HCT116 (cell line): ENCODE measurements at regions of chr11 and their contacts with region 1.

Region 1: GRCh38 chr11:13152736-13153533 is 124.7 kb upstream of the BMAL1 start:
- DNase-seq: no peak
- ATAC-seq: 0 out of 2 replicates have a peak, but pooled peaks have one; percentile 46
- H3K4me3 ChIP-seq: no peak overlapping the region
- H3K27ac ChIP-seq: no peak overlapping the region
- H3K4me1 ChIP-seq: peaks cover 0 to 11% of the 10 kb centered on the region in 2 experiments; a peak in 1 of 4 replicates
- H3K27me3 ChIP-seq: no peaks in the 10 kb centered on the region
- CTCF ChIP-seq: peak; percentile 51 to 84 (median 55); a peak in 5 of 6 replicates
- POLR2A ChIP-seq: no peak
- RAD21 ChIP-seq: peak; percentile 84

Region 2: DNA sequence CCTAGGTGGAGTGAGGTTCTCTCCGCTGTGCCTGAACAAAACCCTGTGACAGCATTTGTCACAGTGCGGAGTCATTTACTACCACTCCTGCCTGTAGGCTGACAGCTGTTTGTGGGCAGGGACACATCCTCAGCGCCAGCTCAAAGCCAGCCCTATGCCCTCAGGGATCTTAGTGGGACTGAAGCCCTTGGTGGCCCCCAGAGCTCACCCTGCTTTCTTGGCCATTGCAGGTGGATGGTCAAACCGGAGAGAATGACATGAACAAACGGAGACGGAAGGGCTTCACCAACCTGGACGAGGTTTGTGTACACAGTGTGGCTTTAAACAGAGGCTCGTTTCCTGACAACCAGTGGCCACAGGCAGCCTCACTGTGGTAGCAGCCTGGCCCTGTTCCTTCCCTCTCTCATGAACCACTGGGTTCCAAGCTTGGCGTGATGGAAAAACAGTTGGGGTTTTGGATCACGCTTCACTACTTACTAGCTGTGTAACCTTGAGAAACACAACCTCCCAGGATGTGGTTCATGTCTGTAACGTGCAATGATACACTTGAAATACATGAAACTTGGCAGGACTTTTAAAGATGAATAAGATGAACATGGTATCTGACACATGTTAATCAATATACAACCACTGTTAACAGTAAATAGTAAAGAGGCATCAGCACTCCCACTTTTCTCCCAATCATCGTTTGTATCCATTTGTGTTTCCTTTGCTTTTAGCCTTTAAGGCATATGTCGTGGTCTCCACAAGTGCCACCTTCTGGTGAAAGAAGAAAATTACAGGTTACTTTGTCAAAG is 916.8 kb before region 1 on chr11:
- CTCF ChIA-PET with region 1: no interaction called
- POLR2A ChIA-PET with region 1: no interaction called
- RAD21 ChIA-PET with region 1: no interaction called
- intact Hi-C with region 1: no loop called
- DNase-seq: peak; percentile 32
- ATAC-seq: peak; percentile 75
- H3K4me3 ChIP-seq: no peak overlapping the region
- H3K27ac ChIP-seq: no peak overlapping the region
- H3K4me1 ChIP-seq: peaks cover 4 to 23% of the 10 kb centered on the region in 2 experiments; a peak in 3 of 4 replicates
- H3K27me3 ChIP-seq: no peaks in the 10 kb centered on the region
- CTCF ChIP-seq: peak; percentile 55 to 82 (median 69)
- POLR2A ChIP-seq: no peak
- RAD21 ChIP-seq: peak; percentile 83

Region 3: GRCh38 chr11:13016415-13016814 is 136.5 kb before region 1 on chr11:
- CTCF ChIA-PET with region 1: no interaction called
- POLR2A ChIA-PET with region 1: no interaction called
- RAD21 ChIA-PET with region 1: no interaction called
- intact Hi-C with region 1: loop called (anchors 5 kb)
- DNase-seq: peak; percentile 13
- ATAC-seq: peak; percentile 73
- H3K4me3 ChIP-seq: no peak overlapping the region
- H3K27ac ChIP-seq: no peak overlapping the region
- H3K4me1 ChIP-seq: no peaks in the 10 kb centered on the region
- H3K27me3 ChIP-seq: no peaks in the 10 kb centered on the region
- CTCF ChIP-seq: peak in 2 of 3 experiments; percentile 14 to 47; a peak in 2 of 6 replicates
- POLR2A ChIP-seq: no peak
- RAD21 ChIP-seq: peak; percentile 72